A549 (cell line): ENCODE measurements at regions of chr13 and their contacts with region 1.

Region 1: DNA sequence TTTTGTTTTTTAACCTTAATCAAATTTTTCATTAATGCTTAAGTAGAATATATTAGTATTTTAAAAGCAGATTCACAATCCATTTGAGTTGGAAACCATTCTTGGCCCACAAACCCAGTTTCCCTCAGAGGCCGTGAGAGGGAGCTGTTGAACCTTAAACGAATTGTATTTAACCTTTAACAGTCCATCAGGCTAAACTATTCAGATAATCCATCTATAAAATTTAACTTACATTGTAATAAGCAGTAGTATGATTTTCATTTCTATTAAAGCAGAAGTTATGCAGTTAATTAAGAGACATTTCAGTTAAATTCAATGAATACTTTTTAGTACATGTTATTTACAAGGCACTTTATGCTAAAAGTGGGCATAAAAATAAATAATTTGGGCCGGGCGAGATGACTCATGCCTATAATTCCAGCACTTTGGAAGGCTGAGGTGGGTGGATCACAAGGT is 123.1 kb upstream of the C1QTNF9B start:
- DNase-seq: peak; percentile 36 to 60
- ATAC-seq: peak in 1 of 2 experiments; percentile 66; a peak in 4 of 6 replicates
- H3K4me3 ChIP-seq: no peak overlapping the region
- H3K27ac ChIP-seq: peak overlapping the region in 1 of 2 experiments; percentile 41; a peak in 1 of 6 replicates
- H3K4me1 ChIP-seq: peaks cover 8% of the 10 kb centered on the region; the same call in 2 of the 3 replicates
- CTCF ChIP-seq: peak; percentile 71
- EP300 ChIP-seq: no peak
- POLR2A ChIP-seq: no peak
- RAD21 ChIP-seq: peak; percentile 84 to 88

Region 2: DNA sequence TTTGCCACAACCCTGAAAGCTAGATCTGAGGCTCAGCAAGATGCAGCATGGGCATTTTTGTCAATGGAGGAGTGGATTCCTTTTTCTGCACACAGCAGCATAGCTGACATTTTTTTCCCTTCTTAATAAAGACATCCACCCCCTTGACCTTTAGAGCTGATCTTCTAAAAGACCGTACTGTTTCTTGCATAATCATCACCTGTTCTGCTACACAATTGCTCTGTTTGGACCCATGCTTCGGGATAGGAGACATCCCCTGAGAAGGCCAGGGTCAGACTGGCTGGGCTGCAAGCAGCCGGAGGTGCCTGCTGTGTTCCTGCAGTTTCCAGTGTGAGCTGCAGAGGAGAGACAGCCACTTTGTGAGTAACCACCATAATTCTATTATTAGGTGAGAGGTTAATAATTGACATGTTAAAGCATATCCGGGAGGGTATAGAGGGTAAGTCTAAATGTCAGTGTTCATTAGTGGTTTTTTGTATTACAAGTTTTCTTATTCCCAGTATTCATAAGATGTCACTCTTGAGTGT is 14.6 kb before region 1 on chr13:
- CTCF ChIA-PET with region 1: interaction called, 22 read pairs
- POLR2A ChIA-PET with region 1: no interaction called
- DNase-seq: no peak
- ATAC-seq: peak; percentile 39 to 41; a peak in 1 of 6 replicates
- H3K4me3 ChIP-seq: no peak overlapping the region
- H3K27ac ChIP-seq: no peak overlapping the region
- H3K4me1 ChIP-seq: peaks cover 11% of the 10 kb centered on the region
- CTCF ChIP-seq: no peak
- EP300 ChIP-seq: no peak
- POLR2A ChIP-seq: no peak
- RAD21 ChIP-seq: no peak

Region 3: DNA sequence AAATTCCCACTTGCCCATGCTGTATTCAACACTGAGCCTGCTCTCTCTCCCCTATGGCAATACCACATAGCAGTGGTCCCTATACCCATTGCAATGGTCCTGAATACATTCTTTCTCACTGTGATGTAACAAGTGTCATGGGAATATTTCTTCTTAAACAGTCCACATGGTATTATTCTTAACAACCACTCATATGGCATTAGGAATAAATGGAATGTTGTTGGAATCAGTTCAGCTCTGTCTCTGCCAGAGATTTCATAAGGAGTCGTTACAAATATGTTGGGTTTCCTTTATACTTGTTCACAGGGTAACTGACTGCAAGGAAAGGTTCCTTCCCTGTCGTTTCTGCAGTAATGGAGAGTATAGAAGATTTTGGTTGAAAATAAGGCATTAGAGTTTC is 11.8 kb after region 1 on chr13:
- CTCF ChIA-PET with region 1: interaction called, 26 read pairs
- POLR2A ChIA-PET with region 1: no interaction called
- DNase-seq: no peak
- ATAC-seq: peak; percentile 30 to 39; a peak in 5 of 6 replicates
- H3K4me3 ChIP-seq: no peak overlapping the region
- H3K27ac ChIP-seq: peak overlapping the region; percentile 81 to 86
- H3K4me1 ChIP-seq: peaks cover 38% of the 10 kb centered on the region
- CTCF ChIP-seq: no peak
- EP300 ChIP-seq: no peak
- POLR2A ChIP-seq: no peak
- RAD21 ChIP-seq: no peak

Region 4: GRCh38 chr13:24053519-24054251 is 33.3 kb after region 1 on chr13:
- CTCF ChIA-PET with region 1: interaction called, 19 read pairs
- POLR2A ChIA-PET with region 1: no interaction called
- DNase-seq: peak; percentile 40 to 72
- ATAC-seq: peak; percentile 96 to 99
- H3K4me3 ChIP-seq: no peak overlapping the region
- H3K27ac ChIP-seq: peak overlapping the region in 1 of 2 experiments; percentile 46; a peak in 1 of 6 replicates
- H3K4me1 ChIP-seq: peaks cover 12% of the 10 kb centered on the region
- CTCF ChIP-seq: peak; percentile 59
- EP300 ChIP-seq: no peak
- POLR2A ChIP-seq: no peak
- RAD21 ChIP-seq: peak; percentile 83 to 86

Region 5: DNA sequence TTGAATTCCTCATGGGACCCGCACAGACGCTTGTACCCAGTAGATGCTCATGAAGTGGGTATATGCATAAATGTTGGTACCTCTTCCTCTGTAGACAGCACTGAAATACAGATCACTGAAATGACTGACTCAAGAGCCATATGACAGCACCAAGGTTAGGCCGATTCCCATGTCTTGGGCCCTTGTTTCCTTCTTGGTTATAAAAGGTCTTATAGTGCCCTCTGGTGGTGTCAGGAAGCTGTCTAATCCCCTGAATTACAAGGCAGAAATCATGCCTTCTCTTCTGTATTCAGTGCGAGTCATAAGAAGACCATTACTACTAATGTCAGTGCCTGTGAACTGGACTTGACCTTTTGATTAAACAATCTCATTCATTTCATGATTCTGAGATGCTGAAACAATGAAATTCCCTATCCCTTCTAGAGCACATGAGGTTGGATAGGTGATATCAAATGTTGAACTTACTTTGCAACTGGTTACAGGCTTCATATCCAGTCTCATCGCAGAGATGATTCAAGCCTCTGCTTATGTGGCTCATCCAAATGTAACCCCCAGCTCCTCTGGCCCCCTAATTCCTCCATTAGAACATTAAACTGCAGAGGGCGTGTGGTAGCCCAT is 199.8 kb after region 1 on chr13:
- CTCF ChIA-PET with region 1: interaction called, 96 read pairs
- POLR2A ChIA-PET with region 1: no interaction called
- DNase-seq: peak; percentile 46 to 76
- ATAC-seq: peak; percentile 90 to 94
- H3K4me3 ChIP-seq: no peak overlapping the region
- H3K27ac ChIP-seq: peak overlapping the region; percentile 72 to 83
- H3K4me1 ChIP-seq: peaks cover 58% of the 10 kb centered on the region
- CTCF ChIP-seq: peak; percentile 80
- EP300 ChIP-seq: no peak
- POLR2A ChIP-seq: no peak
- RAD21 ChIP-seq: peak; percentile 90 to 91

Region 6: DNA sequence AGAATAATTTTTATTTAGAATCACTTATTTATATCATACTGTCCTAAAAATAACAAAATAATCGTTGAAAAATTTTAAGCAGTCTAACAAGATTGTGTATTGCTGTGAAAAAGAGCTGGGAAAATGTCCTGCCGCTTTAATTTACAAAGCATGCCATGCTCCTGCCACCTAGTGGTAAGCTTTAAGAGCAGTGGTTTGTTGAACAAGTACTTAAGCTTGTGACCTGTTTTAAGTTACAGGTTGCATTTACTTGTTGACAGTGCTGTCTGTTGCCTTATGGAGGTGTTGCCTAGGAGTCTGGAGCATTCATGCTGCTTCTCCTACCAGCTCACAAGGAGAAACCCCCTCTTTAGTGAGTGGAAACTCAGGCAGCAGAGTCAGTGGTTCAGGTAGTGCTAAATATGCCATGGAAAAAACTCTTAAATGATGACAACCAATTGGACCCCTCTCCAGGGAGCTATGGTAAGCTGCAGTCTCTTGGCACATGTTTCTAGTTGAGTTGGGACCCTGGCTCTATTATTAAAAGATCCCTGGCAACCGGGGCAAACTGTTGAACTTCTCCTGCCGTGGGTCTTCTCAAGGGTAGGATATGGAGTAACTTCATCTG is 208.6 kb after region 1 on chr13:
- CTCF ChIA-PET with region 1: interaction called, 63 read pairs
- POLR2A ChIA-PET with region 1: no interaction called
- DNase-seq: peak; percentile 34 to 72
- ATAC-seq: peak; percentile 64 to 67; a peak in 4 of 6 replicates
- H3K4me3 ChIP-seq: no peak overlapping the region
- H3K27ac ChIP-seq: no peak overlapping the region
- H3K4me1 ChIP-seq: no peaks in the 10 kb centered on the region
- CTCF ChIP-seq: peak; percentile 74
- EP300 ChIP-seq: no peak
- POLR2A ChIP-seq: no peak
- RAD21 ChIP-seq: peak; percentile 67 to 71